MCF 10A (cell line): ENCODE measurements at regions of chr1 and their contacts with region 1.

Region 1: DNA sequence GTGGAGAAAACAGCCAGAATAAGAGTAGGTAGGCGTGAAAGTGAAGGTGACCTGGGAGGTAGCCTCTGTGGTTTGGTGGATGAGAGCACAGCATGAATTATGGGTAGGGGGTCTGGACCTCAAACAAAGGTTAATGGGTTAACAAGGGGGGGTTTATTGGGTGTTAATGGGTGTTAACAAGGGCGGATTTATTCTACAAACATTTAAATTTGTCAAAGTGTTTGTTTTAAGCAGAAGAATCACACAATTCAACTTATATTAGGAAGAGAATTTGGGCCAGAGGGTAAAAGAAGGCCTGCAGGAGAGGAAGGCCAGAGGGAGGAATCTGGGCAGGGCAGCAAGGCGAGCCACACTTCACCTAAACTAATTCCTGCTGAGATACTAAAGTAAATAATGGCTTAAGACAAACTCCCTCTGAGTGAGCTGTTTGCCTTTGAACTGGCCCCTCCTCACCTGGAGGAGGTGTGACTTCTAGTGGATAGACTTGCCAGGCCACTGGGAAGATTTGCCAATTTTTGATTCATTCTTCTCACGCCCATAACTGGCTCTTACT is 191.7 kb downstream of the GIPC2 start:
- DNase-seq: peak; percentile 94
- H3K4me3 Mint-ChIP-seq: no peak overlapping the region
- H3K27ac Mint-ChIP-seq: peak overlapping the region; percentile 76
- H3K4me1 Mint-ChIP-seq: peaks cover 40% of the 10 kb centered on the region
- H3K27me3 Mint-ChIP-seq: no peaks in the 10 kb centered on the region
- CTCF ChIP-seq: no peak

Region 2: GRCh38 chr1:77438236-77438913 is 799.1 kb before region 1 on chr1:
- CTCF ChIA-PET with region 1: no interaction called
- POLR2A ChIA-PET with region 1: no interaction called
- intact Hi-C with region 1: no loop called
- DNase-seq: peak; percentile 9
- H3K4me3 Mint-ChIP-seq: no peak overlapping the region
- H3K27ac Mint-ChIP-seq: no peak overlapping the region
- H3K4me1 Mint-ChIP-seq: no peaks in the 10 kb centered on the region
- H3K27me3 Mint-ChIP-seq: no peaks in the 10 kb centered on the region
- CTCF ChIP-seq: no peak

Region 3: DNA sequence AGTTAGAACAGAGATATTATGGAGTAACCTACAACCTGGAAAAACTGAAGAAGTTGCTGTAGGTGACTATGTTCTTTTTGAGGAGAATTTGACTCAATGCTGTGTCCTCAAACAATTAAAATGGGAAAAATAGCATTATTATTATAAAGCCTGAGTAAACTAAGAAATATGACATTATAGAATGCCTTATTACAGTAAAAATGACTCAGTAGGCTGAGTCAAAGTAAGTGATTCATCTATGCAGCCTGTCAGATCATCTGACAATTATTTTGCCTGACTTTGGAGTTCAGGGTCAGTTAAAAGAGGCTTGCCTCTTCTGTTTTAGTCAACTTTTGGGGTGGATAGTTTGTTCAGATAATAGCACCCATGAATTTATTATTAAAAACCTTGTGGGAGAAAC is 102.6 kb after region 1 on chr1:
- CTCF ChIA-PET with region 1: no interaction called
- POLR2A ChIA-PET with region 1: interaction called, 7 read pairs
- intact Hi-C with region 1: loop called (anchors 5 kb)
- DNase-seq: peak; percentile 79
- H3K4me3 Mint-ChIP-seq: no peak overlapping the region
- H3K27ac Mint-ChIP-seq: peak overlapping the region; percentile 65
- H3K4me1 Mint-ChIP-seq: peaks cover 27% of the 10 kb centered on the region
- H3K27me3 Mint-ChIP-seq: no peaks in the 10 kb centered on the region
- CTCF ChIP-seq: no peak